HCT116 (cell line): ENCODE measurements at regions of chr13 and their contacts with region 1.

Region 1: DNA sequence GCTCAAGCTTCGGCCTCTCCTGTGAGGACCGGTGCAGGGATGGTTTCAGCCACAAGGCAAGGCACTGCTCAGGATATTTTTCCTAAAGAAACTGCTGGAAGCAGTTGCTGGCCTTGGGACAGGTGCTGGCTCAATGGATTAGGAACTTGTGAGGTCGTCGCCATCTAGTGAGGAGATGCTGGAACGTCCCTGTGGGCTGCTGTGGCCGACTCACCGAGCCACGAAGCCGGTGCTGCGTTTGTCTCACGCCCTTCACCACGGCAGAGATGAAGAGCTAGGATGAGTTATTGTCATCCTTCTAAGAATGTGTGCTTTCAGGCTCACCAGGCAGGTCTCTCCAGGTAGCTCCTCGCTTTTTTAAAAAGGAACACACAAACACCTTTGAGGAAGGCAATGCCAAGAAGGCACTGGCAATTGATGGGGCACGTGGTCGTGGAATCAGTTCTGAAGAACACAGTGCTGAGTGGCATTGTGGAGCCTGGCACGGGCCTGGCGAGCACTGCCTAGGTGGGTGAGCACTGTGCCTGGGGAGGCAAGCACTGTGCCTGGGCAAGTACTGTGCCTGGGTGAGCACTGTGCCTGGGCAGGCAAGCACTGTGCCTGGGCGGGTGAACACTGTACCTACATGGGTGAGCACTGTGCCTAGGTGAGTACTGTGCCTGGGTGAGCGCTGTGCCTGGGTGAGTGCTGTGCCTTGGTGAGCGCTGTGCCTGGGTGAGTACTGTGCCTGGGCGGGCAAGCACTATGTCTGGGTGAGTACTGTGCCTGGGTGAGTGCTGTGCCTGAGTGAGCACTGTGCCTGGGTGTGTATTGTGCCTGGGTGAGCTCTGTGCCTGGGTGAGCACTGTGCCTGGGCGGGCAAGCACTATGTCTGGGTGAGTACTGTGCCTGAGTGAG is 140.4 kb downstream of the TEX29 start:
- DNase-seq: peak; percentile 32
- ATAC-seq: peak; percentile 91
- H3K4me3 ChIP-seq: no peak overlapping the region
- H3K27ac ChIP-seq: no peak overlapping the region
- H3K4me1 ChIP-seq: peaks cover 0 to 4% of the 10 kb centered on the region in 2 experiments; a peak in 1 of 4 replicates
- H3K27me3 ChIP-seq: peaks cover 39% of the 10 kb centered on the region
- CTCF ChIP-seq: peak; percentile 40 to 55 (median 54); a peak in 5 of 6 replicates
- POLR2A ChIP-seq: no peak
- RAD21 ChIP-seq: peak; percentile 79

Region 2: GRCh38 chr13:110944121-110944967 is 516.5 kb before region 1 on chr13:
- CTCF ChIA-PET with region 1: no interaction called
- POLR2A ChIA-PET with region 1: no interaction called
- RAD21 ChIA-PET with region 1: no interaction called
- intact Hi-C with region 1: loop called (anchors 10 kb)
- DNase-seq: peak; percentile 77
- ATAC-seq: peak; percentile 97
- H3K4me3 ChIP-seq: no peak overlapping the region
- H3K27ac ChIP-seq: peak overlapping the region; percentile 38
- H3K4me1 ChIP-seq: peaks cover 10 to 64% of the 10 kb centered on the region in 2 experiments
- H3K27me3 ChIP-seq: no peaks in the 10 kb centered on the region
- CTCF ChIP-seq: peak in 2 of 3 experiments; percentile 93 to 94; a peak in 4 of 6 replicates
- POLR2A ChIP-seq: no peak
- RAD21 ChIP-seq: no peak

Region 3: DNA sequence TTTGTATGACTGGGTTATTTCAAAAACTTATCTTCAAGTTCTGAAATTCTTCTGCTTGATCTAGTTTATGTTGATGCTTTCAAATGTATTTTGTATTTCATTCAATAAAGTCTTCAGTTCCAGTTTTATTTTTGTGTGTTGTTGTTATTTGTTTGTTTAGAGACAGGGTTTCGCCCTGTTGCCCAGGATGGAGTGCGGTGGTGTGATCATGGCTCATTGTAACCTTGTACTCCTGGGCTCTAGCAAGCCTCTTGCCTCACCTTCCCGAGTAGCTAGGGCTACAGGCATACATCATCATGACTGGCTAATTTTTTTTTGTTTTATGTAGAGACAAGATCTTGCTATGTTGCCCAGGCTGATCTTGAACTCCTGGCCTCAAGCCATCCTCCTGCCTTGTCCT is 386.0 kb before region 1 on chr13:
- CTCF ChIA-PET with region 1: no interaction called
- POLR2A ChIA-PET with region 1: no interaction called
- RAD21 ChIA-PET with region 1: no interaction called
- intact Hi-C with region 1: loop called (anchors 5 kb)
- DNase-seq: no peak
- ATAC-seq: no peak
- H3K4me3 ChIP-seq: no peak overlapping the region
- H3K27ac ChIP-seq: no peak overlapping the region
- H3K4me1 ChIP-seq: no peaks in the 10 kb centered on the region
- H3K27me3 ChIP-seq: no peaks in the 10 kb centered on the region
- CTCF ChIP-seq: no peak
- POLR2A ChIP-seq: no peak
- RAD21 ChIP-seq: no peak

Region 4: GRCh38 chr13:111344471-111345191 is 116.2 kb before region 1 on chr13:
- CTCF ChIA-PET with region 1: no interaction called
- POLR2A ChIA-PET with region 1: no interaction called
- RAD21 ChIA-PET with region 1: no interaction called
- intact Hi-C with region 1: loop called (anchors 1 kb)
- DNase-seq: no peak
- ATAC-seq: peak; percentile 94
- H3K4me3 ChIP-seq: no peak overlapping the region
- H3K27ac ChIP-seq: no peak overlapping the region
- H3K4me1 ChIP-seq: no peaks in the 10 kb centered on the region
- H3K27me3 ChIP-seq: no peaks in the 10 kb centered on the region
- CTCF ChIP-seq: peak; percentile 42 to 54 (median 43); a peak in 4 of 6 replicates
- POLR2A ChIP-seq: no peak
- RAD21 ChIP-seq: peak; percentile 55

Region 5: DNA sequence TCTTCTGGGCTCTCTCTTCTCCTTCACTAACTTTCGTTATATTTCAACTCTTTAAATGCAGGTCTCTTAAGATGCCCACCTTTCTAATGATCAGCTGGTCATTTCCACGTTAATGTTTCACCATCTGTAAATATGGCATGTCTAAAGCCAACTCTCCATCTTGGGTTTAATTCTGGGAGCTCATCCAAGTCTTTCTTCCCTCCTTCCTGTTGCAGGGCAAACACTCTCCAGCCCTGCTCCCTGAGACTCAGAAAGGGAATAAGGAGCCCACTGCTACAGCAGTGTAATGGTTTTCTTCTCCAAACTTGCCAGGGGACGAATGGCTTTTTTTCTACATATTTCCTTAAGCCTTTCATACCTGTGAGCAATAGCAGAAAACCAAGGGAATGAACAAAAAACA is 532.9 kb after region 1 on chr13:
- CTCF ChIA-PET with region 1: no interaction called
- POLR2A ChIA-PET with region 1: no interaction called
- RAD21 ChIA-PET with region 1: no interaction called
- intact Hi-C with region 1: no loop called
- DNase-seq: no peak
- ATAC-seq: no peak
- H3K4me3 ChIP-seq: no peak overlapping the region
- H3K27ac ChIP-seq: no peak overlapping the region
- H3K4me1 ChIP-seq: no peaks in the 10 kb centered on the region
- H3K27me3 ChIP-seq: peaks cover 15% of the 10 kb centered on the region
- CTCF ChIP-seq: no peak
- POLR2A ChIP-seq: no peak
- RAD21 ChIP-seq: no peak